GM10248 (cell line): ENCODE measurements at regions of chr3 and their contacts with region 1.

Region 1: GRCh38 chr3:48013288-48013980 is 2.8 kb downstream of the MAP4 start:
- DNase-seq: no peak
- CTCF ChIP-seq: no peak

Region 2: GRCh38 chr3:47996440-47996839 is 17.0 kb before region 1 on chr3:
- CTCF ChIA-PET with region 1: interaction called, 11 read pairs
- POLR2A ChIA-PET with region 1: no interaction called
- DNase-seq: no peak
- CTCF ChIP-seq: no peak